GM12878 (cell line): ENCODE measurements at regions of chr1 and their contacts with region 1.

Region 1: DNA sequence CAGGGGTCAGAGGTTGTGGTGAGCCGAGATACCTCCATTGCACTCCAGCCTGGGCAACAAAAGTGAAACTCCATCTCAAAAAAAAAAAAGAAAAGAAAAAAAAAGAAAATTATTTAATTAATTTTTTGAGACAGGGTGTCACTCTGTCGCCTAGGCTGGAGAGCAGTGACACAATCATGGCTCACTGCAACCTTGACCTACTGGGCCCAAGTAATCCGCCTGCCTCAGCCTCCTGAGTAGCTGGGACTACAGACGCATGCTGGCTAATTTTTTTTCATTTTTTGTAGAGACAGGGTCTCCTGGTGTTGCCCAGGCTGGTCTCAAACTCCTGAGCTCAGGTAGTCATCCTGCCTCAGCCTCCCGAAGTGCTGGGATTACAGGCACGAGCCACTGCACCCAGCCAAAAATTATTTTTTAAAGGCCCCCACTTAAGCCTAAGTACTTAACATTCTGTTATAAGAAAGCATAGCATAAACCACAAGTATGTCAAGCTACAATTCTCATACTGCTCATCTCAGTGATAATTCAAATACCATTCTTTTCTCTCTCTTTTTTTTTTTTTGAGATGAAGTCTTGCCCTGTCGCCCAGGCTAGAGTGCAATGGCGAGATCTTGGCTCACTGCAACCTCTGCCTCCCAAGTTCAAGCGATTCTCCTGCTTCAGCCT is 19.9 kb downstream of the NUCKS1 start:
- DNase-seq: no peak
- ATAC-seq: no peak
- H3K4me3 ChIP-seq: no peak overlapping the region
- H3K27ac ChIP-seq: no peak overlapping the region
- H3K4me1 ChIP-seq: no peaks in the 10 kb centered on the region
- H3K27me3 ChIP-seq: no peaks in the 10 kb centered on the region
- CTCF ChIP-seq: no peak
- EP300 ChIP-seq: no peak
- POLR2A ChIP-seq: no peak
- RAD21 ChIP-seq: no peak

Region 2: DNA sequence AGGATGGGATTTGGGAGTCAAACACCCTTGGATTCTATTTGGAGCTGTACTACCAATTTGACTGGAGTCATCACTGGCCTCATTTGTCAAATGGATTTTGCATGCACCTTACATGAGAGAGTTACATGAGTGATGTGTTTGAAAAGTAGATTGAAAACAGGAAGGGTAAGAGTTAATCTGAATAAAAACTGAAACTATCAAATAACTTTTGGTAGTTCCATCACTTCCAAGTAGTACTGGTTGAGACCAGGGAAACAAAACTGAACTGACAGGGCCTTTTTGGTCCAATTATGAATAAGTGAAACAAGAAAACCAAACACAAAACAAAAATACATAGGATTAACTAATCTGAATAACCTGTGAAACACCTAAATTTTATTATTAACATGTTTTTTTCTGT is 10.3 kb before region 1 on chr1:
- CTCF ChIA-PET with region 1: interaction called, 11 read pairs
- POLR2A ChIA-PET with region 1: no interaction called
- RAD21 ChIA-PET with region 1: no interaction called
- SMC1A ChIA-PET with region 1: interaction called, 69 read pairs
- in situ Hi-C with region 1: no loop called
- intact Hi-C with region 1: no loop called
- DNase-seq: no peak
- ATAC-seq: peak; percentile 56
- H3K4me3 ChIP-seq: no peak overlapping the region
- H3K27ac ChIP-seq: no peak overlapping the region
- H3K4me1 ChIP-seq: no peaks in the 10 kb centered on the region
- H3K27me3 ChIP-seq: no peaks in the 10 kb centered on the region
- CTCF ChIP-seq: no peak
- EP300 ChIP-seq: no peak
- POLR2A ChIP-seq: no peak
- RAD21 ChIP-seq: no peak